ENCODE measurements at regions of chr2 and their contacts with region 1.

Region 1: GRCh38 chr2:70948337-70949003 is 12.8 kb downstream of the ATP6V1B1 start:
- DNase-seq: peak; percentile 79
- H3K4me3 ChIP-seq: peak overlapping the region; percentile 70
- H3K27ac ChIP-seq: no peak overlapping the region
- H3K4me1 ChIP-seq: peaks cover 20% of the 10 kb centered on the region
- CTCF ChIP-seq: peak; percentile 86

Region 2: GRCh38 chr2:70861777-70862625 is 86.5 kb before region 1 on chr2:
- CTCF ChIA-PET with region 1: interaction called, 5 read pairs
- POLR2A ChIA-PET with region 1: no interaction called
- intact Hi-C with region 1: loop called (anchors 2 kb)
- DNase-seq: peak; percentile 59
- H3K4me3 ChIP-seq: no peak overlapping the region
- H3K27ac ChIP-seq: no peak overlapping the region
- H3K4me1 ChIP-seq: no peaks in the 10 kb centered on the region
- CTCF ChIP-seq: peak; percentile 97

Region 3: DNA sequence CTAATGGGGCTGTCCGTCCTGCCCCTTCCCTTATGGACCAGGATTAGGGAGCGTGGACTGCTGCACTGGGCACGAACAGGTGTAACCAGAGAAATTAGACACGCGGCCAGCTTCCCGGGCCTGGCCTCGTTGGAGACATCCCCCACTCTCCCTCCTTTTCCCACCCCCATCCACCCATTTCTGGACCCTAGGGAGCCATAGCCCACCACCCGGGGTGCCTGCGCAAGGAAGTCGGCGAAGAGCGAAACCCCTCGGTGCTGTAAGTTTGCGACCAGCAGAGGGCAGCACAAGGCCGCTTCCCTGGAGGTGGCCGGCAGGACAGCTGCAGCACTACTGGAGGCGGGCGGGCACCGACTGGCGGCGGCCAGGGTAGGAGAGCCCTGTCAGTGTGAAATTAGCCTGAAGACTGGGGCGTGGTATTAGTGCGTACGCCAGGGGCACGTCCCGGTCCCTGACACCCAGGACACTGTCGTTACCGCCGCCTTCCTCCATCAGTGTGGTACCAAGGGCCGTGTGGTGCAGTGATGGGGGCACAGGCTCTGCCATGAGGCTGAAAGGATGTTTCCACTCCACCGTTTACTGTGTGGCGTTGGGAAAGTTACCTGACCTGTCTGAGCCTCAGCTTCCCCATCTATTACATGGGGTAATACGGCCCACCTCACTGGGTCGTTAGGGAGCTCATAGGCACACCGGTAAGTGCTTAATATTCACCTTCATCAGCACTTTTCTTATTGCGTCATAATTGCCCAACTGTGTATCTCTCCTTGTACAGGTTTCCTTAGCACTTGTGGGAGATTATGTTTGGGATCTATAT is 76.9 kb before region 1 on chr2:
- CTCF ChIA-PET with region 1: interaction called, 9 read pairs
- POLR2A ChIA-PET with region 1: interaction called, 3 read pairs
- intact Hi-C with region 1: loop called (anchors 1 kb)
- DNase-seq: peak; percentile 60
- H3K4me3 ChIP-seq: no peak overlapping the region
- H3K27ac ChIP-seq: no peak overlapping the region
- H3K4me1 ChIP-seq: no peaks in the 10 kb centered on the region
- CTCF ChIP-seq: peak; percentile 83

Region 4: DNA sequence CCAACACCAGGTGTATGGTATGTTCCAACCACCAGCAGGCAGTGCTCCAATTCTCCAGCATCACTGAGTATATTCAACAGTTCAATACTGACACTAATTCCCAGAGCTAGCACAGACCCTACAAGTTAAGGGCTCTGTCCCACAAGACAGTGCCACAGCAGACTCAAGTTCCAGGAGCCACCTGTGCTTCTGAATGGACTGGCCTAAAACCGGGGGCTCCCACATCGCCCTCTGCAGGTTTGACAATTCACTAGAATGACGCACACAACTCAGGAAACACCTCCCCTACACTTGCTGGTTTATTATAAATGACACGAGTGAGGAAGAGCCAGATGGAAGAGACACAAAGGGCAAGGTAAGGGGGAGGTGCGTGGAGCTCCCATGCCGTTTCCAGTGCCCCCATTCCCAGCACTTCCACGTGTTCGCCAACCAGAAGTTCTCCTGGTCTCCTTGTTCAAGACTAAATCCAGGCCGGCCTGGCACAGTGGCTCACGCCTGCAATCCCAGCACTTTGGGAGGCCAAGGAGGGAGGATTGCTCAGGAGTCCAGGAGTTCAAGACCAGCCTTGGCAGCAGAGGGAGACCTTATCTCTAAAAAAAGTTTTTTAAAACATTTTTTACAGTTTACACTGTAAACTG is 25.0 kb before region 1 on chr2:
- CTCF ChIA-PET with region 1: no interaction called
- POLR2A ChIA-PET with region 1: no interaction called
- intact Hi-C with region 1: no loop called
- DNase-seq: peak; percentile 28
- H3K4me3 ChIP-seq: no peak overlapping the region
- H3K27ac ChIP-seq: no peak overlapping the region
- H3K4me1 ChIP-seq: no peaks in the 10 kb centered on the region
- CTCF ChIP-seq: peak; percentile 59

Region 5: GRCh38 chr2:70935468-70936164 is 12.9 kb before region 1 on chr2 and contains the start of gene ATP6V1B1:
- CTCF ChIA-PET with region 1: no interaction called
- POLR2A ChIA-PET with region 1: no interaction called
- intact Hi-C with region 1: no loop called
- DNase-seq: no peak
- H3K4me3 ChIP-seq: no peak within 1 kb of the TSS
- H3K27ac ChIP-seq: no peak within 1 kb of the TSS
- H3K4me1 ChIP-seq: peaks cover 6% of the 10 kb centered on the region
- CTCF ChIP-seq: no peak
- total RNA-seq, gene ATP6V1B1: not detected in 2 replicates

Measured in OCI-LY7 (cell line).